Activated CD8-positive, alpha-beta T cell treated with anti-CD3 and anti-CD28 coated beads, Interleukin-2, amount 10 ng/mL, durations not matched to agents 7 days and 5 days (primary cell): ENCODE measurements at regions of chr1 and their contacts with region 1.

Region 1: DNA sequence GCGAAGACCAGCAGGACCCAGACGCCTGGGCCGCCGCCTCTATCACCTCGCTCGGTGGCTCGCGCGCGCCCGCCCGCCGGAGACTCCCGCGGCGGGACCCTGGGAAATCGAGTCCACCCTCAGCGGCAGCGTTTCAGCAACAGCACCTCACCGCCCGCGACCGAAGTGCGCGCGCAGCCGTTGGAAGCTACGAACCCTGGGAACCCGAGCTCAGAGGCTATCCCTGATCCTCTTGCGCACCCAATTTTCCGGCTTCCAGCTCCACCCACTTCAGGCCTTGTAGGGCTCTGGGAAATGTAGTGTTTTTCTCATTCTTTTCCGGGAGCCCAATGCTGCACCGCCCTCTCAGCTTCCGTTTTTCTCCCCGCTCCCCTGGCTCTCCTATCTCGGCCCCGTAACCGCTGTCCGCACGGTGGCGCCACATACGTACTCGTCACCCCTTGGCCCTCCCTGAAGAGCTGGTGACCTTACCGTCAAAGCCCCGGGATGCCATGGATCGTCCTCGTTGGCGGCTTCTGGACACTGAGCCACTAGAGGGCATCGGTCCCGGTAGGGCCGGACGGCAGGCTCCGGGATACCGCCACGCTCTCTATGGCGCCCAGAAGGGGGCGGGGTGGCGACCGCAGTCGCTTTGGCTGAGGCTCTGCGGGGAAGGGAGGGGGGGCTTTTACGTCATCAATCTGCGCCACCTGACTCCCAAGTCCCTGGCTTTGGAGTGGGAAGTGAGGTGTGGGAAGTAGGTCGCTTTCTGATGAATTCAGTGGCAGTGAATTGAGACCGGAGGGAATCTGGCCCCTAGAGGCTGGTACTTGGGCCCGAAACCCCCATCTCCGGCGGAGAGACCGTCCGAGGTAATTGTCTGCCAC is at the starts of genes ODR4 and TPR:
- DNase-seq: peak; percentile 98
- ATAC-seq: peak; percentile 89
- H3K4me3 Mint-ChIP-seq: peak within 1 kb of the TSS; percentile 97
- H3K27ac Mint-ChIP-seq: peak within 1 kb of the TSS; percentile 94
- H3K4me1 Mint-ChIP-seq: peaks cover 33% of the 10 kb centered on the region
- H3K27me3 Mint-ChIP-seq: no peaks in the 10 kb centered on the region
- total RNA-seq, gene ODR4: 12.1 to 12.8 TPM
- total RNA-seq, gene TPR: 131 to 143 TPM

Region 2: DNA sequence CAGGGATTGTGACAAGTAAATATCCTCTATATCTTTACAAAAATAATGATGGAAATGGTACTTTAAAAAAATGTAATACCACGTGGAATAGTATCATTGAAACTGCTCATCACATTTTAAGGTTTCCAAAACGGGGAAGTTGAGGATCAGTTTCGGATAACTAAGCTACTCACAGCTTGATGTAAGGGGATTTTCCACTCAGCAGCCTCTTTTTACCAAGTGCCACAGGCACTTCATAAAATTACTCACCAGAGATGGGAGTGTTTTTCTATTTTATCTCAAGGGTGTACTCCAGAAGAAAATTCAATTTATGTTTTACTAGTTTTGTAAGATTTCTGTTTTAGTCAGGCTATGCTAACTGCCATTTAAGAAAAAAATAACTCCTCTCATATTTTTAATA is 91.9 kb before region 1 on chr1:
- CTCF ChIA-PET with region 1: no interaction called
- POLR2A ChIA-PET with region 1: no interaction called
- DNase-seq: no peak
- ATAC-seq: no peak
- H3K4me3 Mint-ChIP-seq: no peak overlapping the region
- H3K27ac Mint-ChIP-seq: no peak overlapping the region
- H3K4me1 Mint-ChIP-seq: peaks cover 7% of the 10 kb centered on the region
- H3K27me3 Mint-ChIP-seq: no peaks in the 10 kb centered on the region

Region 3: GRCh38 chr1:186330758-186331157 is 44.6 kb before region 1 on chr1:
- CTCF ChIA-PET with region 1: interaction called, 13 read pairs
- POLR2A ChIA-PET with region 1: interaction called, 3 read pairs
- DNase-seq: no peak
- ATAC-seq: no peak
- H3K4me3 Mint-ChIP-seq: no peak overlapping the region
- H3K27ac Mint-ChIP-seq: no peak overlapping the region
- H3K4me1 Mint-ChIP-seq: no peaks in the 10 kb centered on the region
- H3K27me3 Mint-ChIP-seq: no peaks in the 10 kb centered on the region

Region 4: DNA sequence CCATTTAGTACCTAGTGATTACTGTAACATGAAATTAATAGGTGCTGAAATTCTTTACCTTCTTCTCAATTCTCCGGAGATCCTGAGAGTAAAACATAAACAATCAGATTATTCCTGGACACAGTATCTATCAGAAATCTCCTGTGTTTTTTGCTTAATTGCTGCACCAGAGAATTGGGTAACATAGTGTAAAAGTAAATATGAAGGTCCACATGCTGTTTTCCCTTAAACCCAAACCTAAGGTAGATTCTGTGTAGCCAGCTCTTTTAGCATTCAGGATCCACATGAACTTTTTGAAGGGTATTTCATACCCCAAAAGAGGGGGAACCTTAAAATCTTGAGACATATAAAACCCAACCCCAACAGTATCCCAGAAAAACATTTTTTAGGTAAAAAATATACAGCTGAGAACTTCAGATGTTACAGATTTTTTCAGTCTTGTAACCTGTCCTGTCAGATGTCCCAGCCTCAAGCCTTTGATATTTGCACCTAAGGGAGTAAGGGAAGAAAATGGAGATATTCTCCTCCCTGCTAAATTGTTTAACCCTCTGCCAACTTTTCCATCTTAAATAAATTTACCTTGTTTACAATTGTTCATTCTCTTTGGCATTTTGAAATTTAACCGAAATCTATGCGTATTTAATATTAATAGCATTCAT is 11.5 kb after region 1 on chr1:
- CTCF ChIA-PET with region 1: interaction called, 41 read pairs
- POLR2A ChIA-PET with region 1: no interaction called
- DNase-seq: no peak
- ATAC-seq: no peak
- H3K4me3 Mint-ChIP-seq: no peak overlapping the region
- H3K27ac Mint-ChIP-seq: no peak overlapping the region
- H3K4me1 Mint-ChIP-seq: no peaks in the 10 kb centered on the region
- H3K27me3 Mint-ChIP-seq: no peaks in the 10 kb centered on the region

Region 5: DNA sequence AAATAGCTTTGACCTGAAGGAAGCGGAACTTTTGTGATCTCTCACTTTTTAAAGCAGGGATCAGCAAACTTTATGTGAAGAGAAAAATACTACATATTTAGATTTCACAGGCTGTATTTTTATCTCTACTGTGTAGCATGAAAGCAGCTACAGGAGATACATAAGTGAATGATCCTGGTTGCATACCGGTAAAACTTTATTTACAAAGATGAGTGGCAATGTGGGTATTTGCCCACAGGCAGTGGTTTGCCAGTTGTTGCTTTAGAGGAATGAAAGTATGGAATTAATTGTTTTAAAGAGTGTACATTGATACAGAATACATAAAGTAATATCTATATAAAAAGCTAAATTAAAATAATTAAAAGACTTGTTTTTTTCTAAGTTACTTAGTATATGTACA is 18.2 kb after region 1 on chr1:
- CTCF ChIA-PET with region 1: interaction called, 41 read pairs
- POLR2A ChIA-PET with region 1: interaction called, 4 read pairs
- DNase-seq: no peak
- ATAC-seq: no peak
- H3K4me3 Mint-ChIP-seq: no peak overlapping the region
- H3K27ac Mint-ChIP-seq: no peak overlapping the region
- H3K4me1 Mint-ChIP-seq: no peaks in the 10 kb centered on the region
- H3K27me3 Mint-ChIP-seq: no peaks in the 10 kb centered on the region

Region 6: GRCh38 chr1:186404454-186405051 is 29.2 kb after region 1 on chr1:
- CTCF ChIA-PET with region 1: interaction called, 18 read pairs
- POLR2A ChIA-PET with region 1: no interaction called
- DNase-seq: no peak
- ATAC-seq: peak; percentile 60
- H3K4me3 Mint-ChIP-seq: no peak overlapping the region
- H3K27ac Mint-ChIP-seq: no peak overlapping the region
- H3K4me1 Mint-ChIP-seq: peaks cover 2% of the 10 kb centered on the region
- H3K27me3 Mint-ChIP-seq: no peaks in the 10 kb centered on the region